H1 (cell line): ENCODE measurements at regions of chr10 and their contacts with region 1.

Region 1: DNA sequence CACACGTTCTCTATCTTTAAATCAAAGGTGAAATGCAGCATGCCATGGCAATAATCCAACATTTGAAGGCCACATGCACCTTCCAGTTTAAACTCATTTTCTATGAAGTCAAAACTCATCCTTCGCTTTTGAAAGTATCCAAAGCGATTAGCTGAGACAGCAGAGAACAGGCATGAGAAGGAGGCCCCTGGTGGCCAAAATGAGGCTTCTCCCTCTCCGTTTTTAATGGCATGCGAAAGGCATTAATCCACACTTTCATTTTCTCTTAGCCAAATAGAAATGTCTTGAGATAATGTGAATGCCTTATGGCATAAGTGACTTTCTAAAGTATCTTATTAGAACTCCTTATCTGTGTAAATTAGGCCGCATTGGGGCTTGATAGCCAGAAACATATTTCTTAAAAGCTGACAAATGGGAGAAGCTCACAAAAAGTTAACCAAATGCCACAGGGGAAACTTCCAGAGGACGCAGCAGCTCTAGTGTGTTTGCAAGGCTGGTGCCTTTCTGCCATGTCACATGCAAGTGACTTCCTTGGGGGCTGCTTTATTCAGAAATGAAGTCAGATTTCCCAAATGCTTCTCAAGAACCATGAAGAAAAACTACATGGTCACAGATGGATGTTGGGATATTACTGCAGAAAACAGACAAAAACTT is 1189.6 kb downstream of the SORCS1 start:
- DNase-seq: no peak
- H3K4me3 ChIP-seq: no peak overlapping the region
- H3K27ac ChIP-seq: no peak overlapping the region
- H3K4me1 ChIP-seq: peaks cover 0 to 9% (median 4%) of the 10 kb centered on the region in 4 experiments; a peak in 5 of 7 replicates
- H3K27me3 ChIP-seq: no peaks in the 10 kb centered on the region
- CTCF ChIP-seq: peak; percentile 43 to 69 (median 54)
- EP300 ChIP-seq: no peak
- POLR2A ChIP-seq: no peak
- RAD21 ChIP-seq: peak; percentile 55 to 63

Region 2: DNA sequence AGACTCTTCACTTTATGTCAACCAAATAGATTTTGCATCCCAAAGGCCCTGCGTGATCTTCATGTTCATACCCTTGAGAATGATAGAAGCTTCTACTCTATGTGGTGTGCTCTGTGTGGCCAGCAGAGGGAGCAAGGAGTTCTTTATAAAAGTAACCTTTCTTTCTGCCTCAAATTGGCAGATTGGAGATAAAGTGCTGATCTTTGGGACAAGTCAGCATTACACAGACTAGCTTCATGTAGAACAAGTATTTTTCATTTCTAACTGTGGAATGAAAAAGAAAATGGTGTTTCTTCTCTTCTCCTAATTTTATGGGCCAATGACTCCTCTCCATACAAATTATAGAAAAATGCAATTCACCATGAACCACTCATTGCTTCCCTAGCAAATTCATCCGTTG is 24.5 kb before region 1 on chr10:
- CTCF ChIA-PET with region 1: interaction called, 63 read pairs
- POLR2A ChIA-PET with region 1: no interaction called
- DNase-seq: peak in 1 of 2 experiments; percentile 54
- H3K4me3 ChIP-seq: no peak overlapping the region
- H3K27ac ChIP-seq: no peak overlapping the region
- H3K4me1 ChIP-seq: peaks cover 0 to 3% (median 1%) of the 10 kb centered on the region in 4 experiments; a peak in 2 of 7 replicates
- H3K27me3 ChIP-seq: peaks cover 0 to 1% (median 0%) of the 10 kb centered on the region in 4 experiments; a peak in 1 of 7 replicates
- CTCF ChIP-seq: peak in 2 of 3 experiments; percentile 67 to 69; a peak in 3 of 4 replicates
- EP300 ChIP-seq: no peak
- POLR2A ChIP-seq: no peak
- RAD21 ChIP-seq: peak; percentile 77 to 82

Region 3: GRCh38 chr10:105956550-105956949 is 18.4 kb before region 1 on chr10:
- CTCF ChIA-PET with region 1: interaction called, 63 read pairs
- POLR2A ChIA-PET with region 1: no interaction called
- DNase-seq: no peak
- H3K4me3 ChIP-seq: no peak overlapping the region
- H3K27ac ChIP-seq: no peak overlapping the region
- H3K4me1 ChIP-seq: peaks cover 0 to 3% (median 1%) of the 10 kb centered on the region in 4 experiments; a peak in 2 of 7 replicates
- H3K27me3 ChIP-seq: peaks cover 0 to 1% (median 0%) of the 10 kb centered on the region in 4 experiments; a peak in 1 of 7 replicates
- CTCF ChIP-seq: no peak
- EP300 ChIP-seq: no peak
- POLR2A ChIP-seq: no peak
- RAD21 ChIP-seq: no peak

Region 4: DNA sequence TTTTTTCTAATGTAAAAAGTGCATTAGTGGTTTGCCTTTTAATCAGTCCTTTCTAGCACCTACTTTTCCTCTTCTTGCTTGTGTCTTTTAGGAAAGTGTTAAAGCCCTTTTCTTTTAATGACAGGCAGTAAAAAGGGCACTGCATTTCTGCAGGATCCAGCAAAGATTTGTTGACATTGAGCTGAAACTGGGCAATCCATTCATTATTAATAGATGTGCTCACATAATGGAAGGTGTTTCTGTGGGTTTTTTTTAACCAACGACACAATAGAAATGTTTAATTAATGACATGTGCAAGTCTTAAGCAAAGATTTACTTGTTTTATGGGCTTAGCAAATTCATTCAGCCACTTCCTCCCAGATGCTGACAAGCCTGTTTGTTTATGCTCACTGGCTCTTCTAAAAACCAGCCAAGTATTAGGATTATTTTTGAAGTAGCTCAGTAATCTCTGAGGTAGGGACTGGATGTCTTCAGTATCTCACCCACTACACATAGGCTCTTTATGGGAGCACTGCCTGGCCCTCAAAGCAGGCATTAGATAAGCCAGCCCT is 11.5 kb before region 1 on chr10:
- CTCF ChIA-PET with region 1: interaction called, 27 read pairs
- POLR2A ChIA-PET with region 1: no interaction called
- DNase-seq: no peak
- H3K4me3 ChIP-seq: no peak overlapping the region
- H3K27ac ChIP-seq: no peak overlapping the region
- H3K4me1 ChIP-seq: no peaks in the 10 kb centered on the region
- H3K27me3 ChIP-seq: no peaks in the 10 kb centered on the region
- CTCF ChIP-seq: no peak
- EP300 ChIP-seq: no peak
- POLR2A ChIP-seq: no peak
- RAD21 ChIP-seq: no peak

Region 5: GRCh38 chr10:105986912-105987635 is 12.1 kb after region 1 on chr10:
- CTCF ChIA-PET with region 1: interaction called, 32 read pairs
- POLR2A ChIA-PET with region 1: no interaction called
- DNase-seq: no peak
- H3K4me3 ChIP-seq: no peak overlapping the region
- H3K27ac ChIP-seq: no peak overlapping the region
- H3K4me1 ChIP-seq: no peaks in the 10 kb centered on the region; a peak in 1 of 7 replicates
- H3K27me3 ChIP-seq: peaks cover 0 to 1% (median 0%) of the 10 kb centered on the region in 4 experiments; a peak in 1 of 7 replicates
- CTCF ChIP-seq: no peak
- EP300 ChIP-seq: no peak
- POLR2A ChIP-seq: no peak
- RAD21 ChIP-seq: no peak

Region 6: DNA sequence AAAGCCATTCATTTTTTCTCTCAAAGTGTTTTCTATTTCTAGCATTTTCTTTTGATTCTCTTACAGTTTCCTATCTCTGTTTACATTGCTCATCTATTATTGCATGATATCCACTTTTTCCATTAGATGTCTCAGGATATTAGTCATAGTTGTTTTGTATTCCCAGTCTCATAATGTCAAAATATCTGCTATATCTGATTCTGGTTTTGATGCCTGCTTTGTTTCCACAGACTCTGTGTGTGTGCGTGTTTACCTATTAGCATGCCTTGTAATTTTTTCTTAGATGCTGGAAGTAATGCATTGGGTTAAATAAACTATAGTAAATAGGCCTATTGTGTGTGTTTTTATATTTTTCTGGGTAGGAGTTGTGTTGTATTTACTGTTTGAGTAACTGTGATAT is 63.3 kb after region 1 on chr10:
- CTCF ChIA-PET with region 1: no interaction called
- POLR2A ChIA-PET with region 1: no interaction called
- DNase-seq: no peak
- H3K4me3 ChIP-seq: no peak overlapping the region
- H3K27ac ChIP-seq: no peak overlapping the region
- H3K4me1 ChIP-seq: no peaks in the 10 kb centered on the region
- H3K27me3 ChIP-seq: no peaks in the 10 kb centered on the region
- CTCF ChIP-seq: no peak
- EP300 ChIP-seq: no peak
- POLR2A ChIP-seq: no peak
- RAD21 ChIP-seq: no peak